ENCODE measurements at regions of chr13 and their contacts with region 1.

Region 1: DNA sequence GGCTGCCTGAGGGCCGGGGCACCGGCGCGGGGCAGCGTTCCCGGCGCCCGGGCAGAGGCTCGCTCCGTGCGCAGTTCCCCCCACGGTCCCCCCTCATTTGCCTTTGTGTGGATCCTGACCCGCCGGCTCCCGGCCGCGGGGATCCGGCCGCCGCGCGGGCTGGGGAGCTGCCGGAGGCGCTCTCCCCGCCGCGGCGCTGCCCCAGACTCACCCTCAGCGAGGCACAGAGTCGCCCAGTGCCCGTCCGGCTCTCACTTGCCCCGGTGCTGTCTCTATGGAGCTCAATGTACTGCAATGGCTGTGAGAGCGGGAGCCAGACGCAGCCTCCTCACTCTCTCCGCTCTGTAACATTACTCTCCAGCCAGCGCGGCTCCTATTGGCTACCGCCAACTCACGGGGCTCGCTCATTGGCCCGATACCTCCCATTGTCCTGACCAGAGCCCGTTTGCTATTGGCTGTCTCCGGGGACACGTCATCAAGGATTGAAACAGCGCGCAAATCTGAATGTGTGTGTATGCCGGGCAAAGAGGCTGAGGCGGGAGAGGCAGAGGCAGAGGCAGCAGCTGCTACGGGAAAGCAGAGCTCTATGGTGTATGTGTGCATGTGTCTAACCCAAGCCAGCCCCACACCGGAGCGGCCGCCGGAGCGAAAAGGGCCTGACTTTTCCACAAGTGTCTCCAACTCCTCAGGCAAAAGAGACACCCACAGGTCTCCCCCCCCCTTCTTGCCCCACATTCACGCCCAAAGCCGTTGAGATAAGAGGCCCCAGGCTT is at the start of gene HMGB1:
- DNase-seq: peak; percentile 99
- H3K4me3 ChIP-seq: peak within 1 kb of the TSS; percentile 54 to 76 (median 58)
- H3K27ac ChIP-seq: peak within 1 kb of the TSS; percentile 89
- H3K4me1 ChIP-seq: peaks cover 23% of the 10 kb centered on the region
- H3K27me3 ChIP-seq: no peaks in the 10 kb centered on the region
- CTCF ChIP-seq: no peak
- total RNA-seq, gene HMGB1: 78.0 to 273 TPM

Region 2: DNA sequence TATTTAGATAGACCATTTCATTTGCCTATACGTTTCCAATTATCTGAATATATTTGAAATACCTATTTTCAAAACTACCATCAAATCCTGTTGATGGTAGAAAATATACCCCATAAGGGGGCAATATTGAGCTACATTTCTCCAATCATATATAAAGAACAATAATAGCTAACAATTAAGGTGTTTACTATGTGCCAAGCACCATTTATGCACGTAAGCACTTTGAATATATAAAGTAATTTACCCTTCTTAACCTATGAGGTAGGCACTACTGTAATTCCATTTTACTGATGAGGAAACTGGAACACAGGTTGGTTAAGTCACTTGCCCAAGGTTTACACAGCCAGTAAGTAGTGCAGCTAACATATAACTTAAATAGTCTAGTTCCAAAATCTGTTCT is 694.5 kb before region 1 on chr13:
- CTCF ChIA-PET with region 1: no interaction called
- dilution Hi-C with region 1: no loop called
- in situ Hi-C with region 1: no loop called
- intact Hi-C with region 1: loop called (anchors 5 kb)
- DNase-seq: peak; percentile 10
- H3K4me3 ChIP-seq: no peak overlapping the region
- H3K27ac ChIP-seq: no peak overlapping the region
- H3K4me1 ChIP-seq: no peaks in the 10 kb centered on the region
- H3K27me3 ChIP-seq: no peaks in the 10 kb centered on the region
- CTCF ChIP-seq: peak; percentile 26 to 41

Region 3: DNA sequence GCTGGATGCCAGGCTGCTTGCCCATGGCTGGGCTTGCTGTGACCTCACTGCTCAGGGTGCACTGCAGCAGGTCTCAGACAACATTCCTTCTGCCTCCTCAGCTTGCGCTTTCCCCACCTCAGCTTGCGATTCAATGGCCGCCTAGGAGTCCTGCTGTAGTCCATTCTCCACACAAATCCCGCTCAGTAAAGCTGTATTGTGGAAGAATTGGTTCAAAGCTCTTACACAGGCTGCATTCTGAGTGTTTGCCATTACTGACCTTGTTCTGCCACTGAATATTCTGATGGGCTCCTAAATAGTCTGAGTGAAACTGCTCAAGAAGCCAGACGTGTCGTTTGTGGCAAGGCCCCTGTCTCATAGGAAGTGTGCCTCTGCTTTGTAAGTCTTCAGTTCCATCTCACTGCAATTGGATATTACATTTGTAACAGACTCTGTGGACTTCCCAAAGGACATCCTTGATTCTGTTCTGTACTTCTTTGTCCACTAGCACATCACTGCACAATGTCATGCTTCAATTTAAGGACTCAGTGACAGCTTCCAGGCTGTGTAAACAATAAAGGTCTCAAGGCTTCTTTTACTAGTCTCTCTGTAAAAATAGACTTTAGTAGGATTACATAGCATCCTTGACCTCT is 208.2 kb before region 1 on chr13:
- CTCF ChIA-PET with region 1: interaction called, 4 read pairs
- dilution Hi-C with region 1: no loop called
- in situ Hi-C with region 1: no loop called
- intact Hi-C with region 1: loop called (anchors 1 kb)
- DNase-seq: no peak
- H3K4me3 ChIP-seq: no peak overlapping the region
- H3K27ac ChIP-seq: no peak overlapping the region
- H3K4me1 ChIP-seq: no peaks in the 10 kb centered on the region
- H3K27me3 ChIP-seq: no peaks in the 10 kb centered on the region
- CTCF ChIP-seq: no peak

Region 4: GRCh38 chr13:30422054-30422839 is 43.5 kb before region 1 on chr13 and contains the start of gene UBE2L5:
- CTCF ChIA-PET with region 1: no interaction called
- dilution Hi-C with region 1: no loop called
- in situ Hi-C with region 1: no loop called
- intact Hi-C with region 1: loop called (anchors 5 kb)
- DNase-seq: peak; percentile 73
- H3K4me3 ChIP-seq: peak within 1 kb of the TSS; percentile 62 to 64 (median 62)
- H3K27ac ChIP-seq: peak within 1 kb of the TSS; percentile 52
- H3K4me1 ChIP-seq: peaks cover 22% of the 10 kb centered on the region
- H3K27me3 ChIP-seq: no peaks in the 10 kb centered on the region
- CTCF ChIP-seq: no peak
- total RNA-seq, gene UBE2L5: not detected

Region 5: DNA sequence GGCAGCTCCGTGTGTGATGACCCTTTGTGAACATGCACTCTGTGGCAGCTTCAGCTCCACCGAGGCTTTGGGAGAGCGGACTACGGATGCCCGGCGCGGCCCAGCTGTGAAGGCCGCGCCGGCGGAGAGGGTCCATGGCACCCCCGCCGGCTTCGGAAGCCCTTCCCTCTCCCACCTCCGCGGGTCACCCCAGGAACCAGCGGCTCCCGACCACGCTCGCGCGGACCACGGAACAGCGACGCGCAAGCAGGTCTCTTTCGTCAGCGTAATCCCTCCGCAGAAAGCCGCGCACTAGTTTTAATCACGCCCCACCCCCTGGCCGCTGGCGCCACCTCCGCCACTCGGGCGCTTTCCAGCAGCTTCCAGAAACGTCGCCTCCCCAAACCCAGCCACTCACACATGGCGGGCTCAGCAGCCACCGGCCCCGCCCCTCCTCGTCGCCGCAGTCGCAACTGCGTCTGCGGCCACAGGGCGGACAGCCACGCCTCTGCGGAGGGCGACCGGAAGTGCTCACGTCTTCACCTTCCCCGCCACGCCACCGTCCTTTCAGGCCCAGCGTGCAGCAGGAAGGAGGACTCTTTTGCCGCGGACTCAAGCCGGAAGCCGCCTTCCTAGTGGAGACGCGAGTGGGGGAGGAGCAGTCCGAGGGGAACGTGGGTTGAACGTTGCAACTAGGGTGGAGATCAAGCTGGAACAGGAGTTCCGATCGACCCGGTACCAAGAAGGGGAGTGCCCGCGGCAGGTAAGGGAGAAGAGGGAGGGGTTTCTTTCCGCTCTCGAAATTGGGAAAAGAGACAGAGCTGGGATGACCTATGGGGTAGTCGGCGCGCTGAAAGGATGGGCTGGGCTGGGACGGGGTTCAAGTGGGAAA is 151.8 kb after region 1 on chr13 and contains the start of gene USPL1:
- CTCF ChIA-PET with region 1: interaction called, 4 read pairs
- dilution Hi-C with region 1: no loop called
- in situ Hi-C with region 1: loop called in 1 of 2 experiments (anchors 10 kb)
- intact Hi-C with region 1: loop called (anchors 1 kb)
- DNase-seq: peak; percentile 99
- H3K4me3 ChIP-seq: peak within 1 kb of the TSS; percentile 71 to 78 (median 75)
- H3K27ac ChIP-seq: peak within 1 kb of the TSS; percentile 96
- H3K4me1 ChIP-seq: peaks cover 3% of the 10 kb centered on the region
- H3K27me3 ChIP-seq: no peaks in the 10 kb centered on the region
- CTCF ChIP-seq: peak in 1 of 2 donors; percentile 20
- total RNA-seq, gene USPL1: 12.4 to 13.5 TPM

Region 6: GRCh38 chr13:31044377-31045285 is 578.9 kb after region 1 on chr13:
- CTCF ChIA-PET with region 1: no interaction called
- dilution Hi-C with region 1: no loop called
- in situ Hi-C with region 1: no loop called
- intact Hi-C with region 1: loop called (anchors 2 kb)
- DNase-seq: peak; percentile 72
- H3K4me3 ChIP-seq: no peak overlapping the region
- H3K27ac ChIP-seq: peak overlapping the region; percentile 74
- H3K4me1 ChIP-seq: peaks cover 32% of the 10 kb centered on the region
- H3K27me3 ChIP-seq: no peaks in the 10 kb centered on the region
- CTCF ChIP-seq: peak; percentile 97 to 98